ENCODE measurements at regions of chr9 and their contacts with region 1.

Region 1: GRCh38 chr9:14096258-14096922 is 217.6 kb downstream of the NFIB start:
- DNase-seq: peak; percentile 48
- H3K4me3 Mint-ChIP-seq: peak overlapping the region; percentile 69
- H3K27ac Mint-ChIP-seq: peak overlapping the region; percentile 94
- H3K4me1 Mint-ChIP-seq: peaks cover 22% of the 10 kb centered on the region
- H3K27me3 Mint-ChIP-seq: no peaks in the 10 kb centered on the region
- CTCF ChIP-seq: no peak

Region 2: GRCh38 chr9:13841746-13842462 is 254.5 kb before region 1 on chr9:
- CTCF ChIA-PET with region 1: no interaction called
- intact Hi-C with region 1: no loop called
- DNase-seq: peak; percentile 0
- H3K4me3 Mint-ChIP-seq: no peak overlapping the region
- H3K27ac Mint-ChIP-seq: no peak overlapping the region
- H3K4me1 Mint-ChIP-seq: no peaks in the 10 kb centered on the region
- H3K27me3 Mint-ChIP-seq: no peaks in the 10 kb centered on the region
- CTCF ChIP-seq: no peak

Region 3: DNA sequence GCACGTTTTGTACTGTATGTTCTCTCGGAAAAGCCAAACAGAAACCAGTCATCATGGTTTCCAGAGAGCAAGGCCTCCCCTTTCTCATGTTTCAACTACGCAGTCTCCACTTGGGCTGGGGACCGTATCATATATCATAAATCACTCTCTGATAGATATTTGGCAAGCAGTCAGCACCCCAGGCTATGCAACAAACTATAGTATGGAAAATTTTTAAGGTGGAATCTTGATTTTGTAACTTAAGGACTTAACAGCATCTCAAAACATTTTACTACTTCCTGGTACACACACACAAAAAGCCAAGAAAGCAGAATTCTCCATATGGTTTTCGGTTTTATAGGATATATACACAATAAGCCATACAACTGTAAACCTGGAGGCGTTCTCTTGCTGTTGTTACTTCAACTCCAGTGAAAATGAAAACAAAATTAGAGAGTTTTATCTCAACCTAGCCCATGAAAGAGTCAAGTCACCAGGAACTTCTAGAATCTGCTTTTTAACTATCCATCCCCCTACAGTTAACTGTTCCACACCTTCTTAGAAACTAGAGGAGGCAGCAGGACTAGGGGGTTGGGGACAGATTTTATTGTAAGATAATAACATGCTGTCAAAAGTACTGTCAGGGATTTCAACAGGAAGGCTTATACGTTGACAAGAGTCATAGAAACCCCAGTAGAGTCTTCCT is 65.9 kb before region 1 on chr9:
- CTCF ChIA-PET with region 1: no interaction called
- intact Hi-C with region 1: loop called (anchors 2 kb)
- DNase-seq: peak; percentile 42
- H3K4me3 Mint-ChIP-seq: peak overlapping the region; percentile 17
- H3K27ac Mint-ChIP-seq: no peak overlapping the region
- H3K4me1 Mint-ChIP-seq: peaks cover 12% of the 10 kb centered on the region
- H3K27me3 Mint-ChIP-seq: no peaks in the 10 kb centered on the region
- CTCF ChIP-seq: no peak

Region 4: GRCh38 chr9:14179449-14179848 is 83.1 kb after region 1 on chr9:
- CTCF ChIA-PET with region 1: no interaction called
- intact Hi-C with region 1: loop called (anchors 2 kb)
- DNase-seq: peak; percentile 56
- H3K4me3 Mint-ChIP-seq: no peak overlapping the region
- H3K27ac Mint-ChIP-seq: peak overlapping the region; percentile 82
- H3K4me1 Mint-ChIP-seq: peaks cover 37% of the 10 kb centered on the region
- H3K27me3 Mint-ChIP-seq: no peaks in the 10 kb centered on the region
- CTCF ChIP-seq: no peak

Region 5: GRCh38 chr9:14212077-14212476 is 115.7 kb after region 1 on chr9:
- CTCF ChIA-PET with region 1: no interaction called
- intact Hi-C with region 1: loop called (anchors 5 kb)
- DNase-seq: no peak
- H3K4me3 Mint-ChIP-seq: peak overlapping the region; percentile 55
- H3K27ac Mint-ChIP-seq: peak overlapping the region; percentile 89
- H3K4me1 Mint-ChIP-seq: peaks cover 56% of the 10 kb centered on the region
- H3K27me3 Mint-ChIP-seq: no peaks in the 10 kb centered on the region
- CTCF ChIP-seq: no peak

Region 6: DNA sequence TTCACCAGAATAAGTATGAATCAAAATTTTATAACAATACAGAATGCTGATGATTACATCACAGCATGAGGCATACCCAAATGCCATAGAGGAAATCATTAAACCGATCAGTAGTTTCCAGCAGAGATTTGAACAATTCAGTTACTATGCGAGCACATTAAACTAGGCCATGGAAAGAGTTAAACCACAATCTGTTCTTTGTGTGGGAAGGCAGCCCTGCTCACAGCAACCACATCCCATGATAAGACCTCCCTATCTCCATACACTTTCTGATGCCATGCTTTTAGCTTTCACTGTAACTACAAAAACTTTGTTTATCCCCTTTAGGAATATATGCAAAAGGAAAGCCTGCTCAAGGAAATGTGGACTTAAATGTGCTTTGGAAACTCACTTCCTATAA is 213.0 kb after region 1 on chr9:
- CTCF ChIA-PET with region 1: no interaction called
- intact Hi-C with region 1: loop called (anchors 5 kb)
- DNase-seq: peak; percentile 41
- H3K4me3 Mint-ChIP-seq: peak overlapping the region; percentile 54
- H3K27ac Mint-ChIP-seq: peak overlapping the region; percentile 54
- H3K4me1 Mint-ChIP-seq: peaks cover 29% of the 10 kb centered on the region
- H3K27me3 Mint-ChIP-seq: no peaks in the 10 kb centered on the region
- CTCF ChIP-seq: no peak

Region 7: GRCh38 chr9:14322211-14323082 is 226.1 kb after region 1 on chr9:
- CTCF ChIA-PET with region 1: no interaction called
- intact Hi-C with region 1: loop called (anchors 5 kb)
- DNase-seq: peak; percentile 88
- H3K4me3 Mint-ChIP-seq: peak overlapping the region; percentile 70
- H3K27ac Mint-ChIP-seq: peak overlapping the region; percentile 70
- H3K4me1 Mint-ChIP-seq: peaks cover 31% of the 10 kb centered on the region
- H3K27me3 Mint-ChIP-seq: no peaks in the 10 kb centered on the region
- CTCF ChIP-seq: peak; percentile 28

Region 8: GRCh38 chr9:14508884-14509283 is 412.5 kb after region 1 on chr9:
- CTCF ChIA-PET with region 1: interaction called, 16 read pairs
- intact Hi-C with region 1: no loop called
- DNase-seq: no peak
- H3K4me3 Mint-ChIP-seq: no peak overlapping the region
- H3K27ac Mint-ChIP-seq: no peak overlapping the region
- H3K4me1 Mint-ChIP-seq: no peaks in the 10 kb centered on the region
- H3K27me3 Mint-ChIP-seq: no peaks in the 10 kb centered on the region
- CTCF ChIP-seq: no peak